Caco-2 (cell line): ENCODE measurements at regions of chr16 and their contacts with region 1.

Region 1: GRCh38 chr16:84277237-84277823 is 17.3 kb upstream of the WFDC1 start:
- DNase-seq: peak; percentile 65 to 81
- H3K4me3 ChIP-seq: no peak overlapping the region
- H3K4me3 Mint-ChIP-seq: no peak overlapping the region
- H3K27ac Mint-ChIP-seq: no peak overlapping the region
- H3K4me1 ChIP-seq: peaks cover 4% of the 10 kb centered on the region; the same call in 1 of the 2 replicates
- H3K4me1 Mint-ChIP-seq: peaks cover 7% of the 10 kb centered on the region
- H3K27me3 ChIP-seq: no peaks in the 10 kb centered on the region
- H3K27me3 Mint-ChIP-seq: peaks cover 4% of the 10 kb centered on the region
- CTCF ChIP-seq: peak; percentile 86 to 88

Region 2: GRCh38 chr16:84266451-84266850 is 10.9 kb before region 1 on chr16:
- CTCF ChIA-PET with region 1: interaction called, 10 read pairs
- POLR2A ChIA-PET with region 1: no interaction called
- intact Hi-C with region 1: no loop called
- DNase-seq: peak; percentile 87 to 91
- H3K4me3 ChIP-seq: peak overlapping the region; percentile 20; the same call in 1 of the 2 replicates
- H3K4me3 Mint-ChIP-seq: no peak overlapping the region
- H3K27ac Mint-ChIP-seq: no peak overlapping the region
- H3K4me1 ChIP-seq: no peaks in the 10 kb centered on the region; the same call in 1 of the 2 replicates
- H3K4me1 Mint-ChIP-seq: no peaks in the 10 kb centered on the region
- H3K27me3 ChIP-seq: 0 out of 2 replicates have a peak, but pooled peaks cover 1% of the 10 kb centered on the region
- H3K27me3 Mint-ChIP-seq: peaks cover 5% of the 10 kb centered on the region
- CTCF ChIP-seq: no peak

Region 3: GRCh38 chr16:84308120-84308519 is 30.8 kb after region 1 on chr16:
- CTCF ChIA-PET with region 1: interaction called, 15 read pairs
- POLR2A ChIA-PET with region 1: no interaction called
- intact Hi-C with region 1: loop called (anchors 1 kb)
- DNase-seq: peak; percentile 54 to 74
- H3K4me3 ChIP-seq: no peak overlapping the region
- H3K4me3 Mint-ChIP-seq: no peak overlapping the region
- H3K27ac Mint-ChIP-seq: no peak overlapping the region
- H3K4me1 ChIP-seq: peaks cover 6% of the 10 kb centered on the region; the same call in 1 of the 2 replicates
- H3K4me1 Mint-ChIP-seq: no peaks in the 10 kb centered on the region
- H3K27me3 ChIP-seq: no peaks in the 10 kb centered on the region
- H3K27me3 Mint-ChIP-seq: peaks cover 2% of the 10 kb centered on the region
- CTCF ChIP-seq: peak; percentile 62 to 81

Region 4: GRCh38 chr16:84368308-84368996 is 91.1 kb after region 1 on chr16 and contains the start of gene ATP2C2:
- CTCF ChIA-PET with region 1: no interaction called
- POLR2A ChIA-PET with region 1: no interaction called
- intact Hi-C with region 1: loop called (anchors 10 kb)
- DNase-seq: peak; percentile 89 to 95
- H3K4me3 ChIP-seq: peak within 1 kb of the TSS; percentile 65
- H3K4me3 Mint-ChIP-seq: peak within 1 kb of the TSS; percentile 93
- H3K27ac Mint-ChIP-seq: peak within 1 kb of the TSS; percentile 93
- H3K4me1 ChIP-seq: peaks cover 15% of the 10 kb centered on the region
- H3K4me1 Mint-ChIP-seq: peaks cover 16% of the 10 kb centered on the region
- H3K27me3 ChIP-seq: no peaks in the 10 kb centered on the region
- H3K27me3 Mint-ChIP-seq: no peaks in the 10 kb centered on the region
- CTCF ChIP-seq: no peak
- total RNA-seq, gene ATP2C2: 45.7 and 47.0 TPM in 2 replicates

Region 5: DNA sequence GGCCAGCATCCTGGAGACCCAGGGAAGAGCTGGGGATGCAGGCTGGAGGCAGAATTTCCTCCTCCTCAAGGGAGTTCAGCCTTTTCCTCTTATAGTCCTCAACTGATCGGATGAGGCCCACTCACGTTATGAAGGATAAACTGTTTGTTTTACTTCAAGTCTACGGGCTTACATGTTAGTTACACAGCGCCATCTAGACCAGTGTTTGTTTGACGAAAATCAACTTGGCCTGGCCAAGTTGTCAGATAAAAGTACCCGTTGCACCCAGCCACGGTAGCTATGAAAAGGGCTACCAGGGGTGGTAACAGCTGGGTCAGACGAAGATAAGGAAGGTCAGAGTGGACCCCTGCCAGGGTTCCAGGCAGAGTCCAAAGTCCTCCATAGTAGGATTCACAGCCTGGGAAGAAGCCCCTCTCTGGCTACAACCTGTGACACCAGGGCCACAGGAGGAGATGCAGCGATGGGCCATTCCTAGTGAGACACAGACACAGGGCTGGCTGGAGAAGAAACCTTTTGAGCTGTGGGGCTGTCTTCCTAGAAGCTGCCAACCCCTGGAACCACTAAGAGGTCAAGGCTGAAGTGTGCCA is 187.7 kb after region 1 on chr16:
- CTCF ChIA-PET with region 1: no interaction called
- POLR2A ChIA-PET with region 1: no interaction called
- intact Hi-C with region 1: loop called (anchors 5 kb)
- DNase-seq: peak in 1 of 2 experiments; percentile 16
- H3K4me3 ChIP-seq: no peak overlapping the region
- H3K4me3 Mint-ChIP-seq: no peak overlapping the region
- H3K27ac Mint-ChIP-seq: no peak overlapping the region
- H3K4me1 ChIP-seq: no peaks in the 10 kb centered on the region
- H3K4me1 Mint-ChIP-seq: peaks cover 5% of the 10 kb centered on the region
- H3K27me3 ChIP-seq: no peaks in the 10 kb centered on the region
- H3K27me3 Mint-ChIP-seq: no peaks in the 10 kb centered on the region
- CTCF ChIP-seq: no peak

Region 6: GRCh38 chr16:84484579-84485254 is 207.4 kb after region 1 on chr16:
- CTCF ChIA-PET with region 1: interaction called, 8 read pairs
- POLR2A ChIA-PET with region 1: interaction called, 3 read pairs
- intact Hi-C with region 1: loop called (anchors 1 kb)
- DNase-seq: peak; percentile 65 to 78
- H3K4me3 ChIP-seq: no peak overlapping the region
- H3K4me3 Mint-ChIP-seq: no peak overlapping the region
- H3K27ac Mint-ChIP-seq: no peak overlapping the region
- H3K4me1 ChIP-seq: no peaks in the 10 kb centered on the region
- H3K4me1 Mint-ChIP-seq: no peaks in the 10 kb centered on the region
- H3K27me3 ChIP-seq: no peaks in the 10 kb centered on the region
- H3K27me3 Mint-ChIP-seq: no peaks in the 10 kb centered on the region
- CTCF ChIP-seq: peak; percentile 87 to 90